ENCODE measurements at regions of chr6 and their contacts with region 1.

Region 1: DNA sequence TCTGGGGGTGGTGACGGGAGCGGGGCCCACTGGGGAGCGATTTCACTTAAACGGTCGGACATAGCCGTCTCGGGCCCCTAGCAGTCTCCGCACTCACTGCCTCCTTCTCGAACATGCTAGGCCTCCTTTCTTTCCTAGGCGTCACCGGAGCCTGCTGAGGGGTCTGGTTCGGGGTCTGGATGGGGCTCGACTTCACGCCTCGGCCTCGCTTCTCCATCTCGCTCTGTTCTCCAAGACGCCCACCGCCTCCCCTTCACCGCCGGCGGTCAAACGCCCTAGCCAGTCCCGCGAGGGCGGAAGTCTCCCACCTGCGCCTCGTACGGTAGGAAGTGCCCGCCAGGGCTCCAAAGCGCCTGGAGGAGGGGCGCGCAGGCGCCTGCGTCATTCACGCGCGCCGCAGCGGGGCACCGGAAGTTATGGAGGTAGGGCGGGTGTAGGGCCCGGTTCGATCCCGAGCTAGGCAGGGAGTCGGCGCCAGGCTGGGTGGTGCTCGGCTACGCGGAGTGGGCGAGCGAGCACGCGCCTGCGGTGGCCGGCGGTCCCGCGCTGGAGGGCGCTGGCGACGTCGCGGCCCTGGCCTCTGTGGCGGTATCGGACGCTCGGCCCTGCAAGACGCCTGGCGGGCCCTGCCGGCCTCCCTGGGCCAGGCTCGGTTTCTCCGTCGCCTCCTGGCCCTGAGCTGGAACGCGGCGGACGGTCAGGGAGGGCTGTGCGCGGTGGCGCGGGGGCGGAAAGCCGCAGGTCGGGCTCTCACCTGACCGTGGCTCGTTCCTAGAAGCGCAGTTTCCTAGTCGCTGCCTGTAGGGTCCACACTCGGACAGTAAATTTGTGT is at the starts of genes DYNLT2 and ERMARD:
- DNase-seq: peak; percentile 82 to 97 (median 93)
- ATAC-seq: peak; percentile 94
- H3K4me3 ChIP-seq: peak within 1 kb of the TSS; percentile 61 to 80
- H3K4me3 Mint-ChIP-seq: peak within 1 kb of the TSS; percentile 100
- H3K27ac ChIP-seq: peak within 1 kb of the TSS; percentile 89 to 95
- H3K27ac Mint-ChIP-seq: peak within 1 kb of the TSS; percentile 100
- H3K4me1 ChIP-seq: peaks cover 26% of the 10 kb centered on the region
- H3K4me1 Mint-ChIP-seq: peaks cover 40% of the 10 kb centered on the region
- H3K27me3 ChIP-seq: no peaks in the 10 kb centered on the region
- H3K27me3 Mint-ChIP-seq: no peaks in the 10 kb centered on the region
- CTCF ChIP-seq: no peak
- total RNA-seq, gene DYNLT2: 3.6 to 3.7 TPM
- total RNA-seq, gene ERMARD: 21.2 to 23.2 TPM

Region 2: DNA sequence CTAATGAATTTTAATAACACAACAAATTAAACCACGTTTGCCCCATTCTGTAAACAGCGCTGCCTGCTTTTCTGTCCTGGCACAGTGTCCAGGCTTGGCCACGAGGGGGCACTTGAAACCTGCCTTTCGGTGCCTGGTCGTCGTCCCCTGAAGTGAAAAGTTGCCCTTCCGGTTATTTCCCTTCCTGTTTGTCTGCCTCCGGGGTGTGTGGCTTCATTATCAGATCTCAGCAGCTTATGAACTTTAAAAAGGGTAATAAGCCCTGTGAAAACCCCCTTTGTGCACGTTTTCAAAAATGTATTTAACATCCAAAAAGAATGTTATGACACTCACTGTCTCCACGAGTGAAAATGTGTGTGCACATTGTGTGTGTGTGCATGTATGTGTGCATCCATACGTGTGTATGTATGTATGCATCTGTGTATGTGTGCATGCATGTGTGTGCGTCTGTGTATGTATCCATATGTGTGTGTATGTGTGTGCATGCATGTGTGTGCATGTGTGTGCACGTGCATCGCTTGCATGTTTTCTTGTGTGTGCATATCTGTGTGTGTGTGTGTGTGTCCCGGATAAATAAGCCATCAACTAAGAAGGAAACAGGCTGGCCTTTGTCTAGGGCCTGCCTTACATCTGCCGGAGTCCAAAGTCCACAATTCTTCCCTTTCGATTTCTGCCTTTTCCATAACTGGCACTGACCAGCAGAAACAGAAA is 856.2 kb before region 1 on chr6:
- CTCF ChIA-PET with region 1: no interaction called
- POLR2A ChIA-PET with region 1: no interaction called
- intact Hi-C with region 1: loop called in 1 of 2 experiments (anchors 1 kb)
- DNase-seq: peak; percentile 52 to 91 (median 78)
- ATAC-seq: peak; percentile 98
- H3K4me3 ChIP-seq: peak overlapping the region; percentile 8 to 16
- H3K4me3 Mint-ChIP-seq: peak overlapping the region; percentile 57
- H3K27ac ChIP-seq: no peak overlapping the region
- H3K27ac Mint-ChIP-seq: peak overlapping the region; percentile 69
- H3K4me1 ChIP-seq: peaks cover 7% of the 10 kb centered on the region
- H3K4me1 Mint-ChIP-seq: peaks cover 17% of the 10 kb centered on the region
- H3K27me3 ChIP-seq: no peaks in the 10 kb centered on the region
- H3K27me3 Mint-ChIP-seq: peaks cover 4% of the 10 kb centered on the region
- CTCF ChIP-seq: peak; percentile 81

Region 3: DNA sequence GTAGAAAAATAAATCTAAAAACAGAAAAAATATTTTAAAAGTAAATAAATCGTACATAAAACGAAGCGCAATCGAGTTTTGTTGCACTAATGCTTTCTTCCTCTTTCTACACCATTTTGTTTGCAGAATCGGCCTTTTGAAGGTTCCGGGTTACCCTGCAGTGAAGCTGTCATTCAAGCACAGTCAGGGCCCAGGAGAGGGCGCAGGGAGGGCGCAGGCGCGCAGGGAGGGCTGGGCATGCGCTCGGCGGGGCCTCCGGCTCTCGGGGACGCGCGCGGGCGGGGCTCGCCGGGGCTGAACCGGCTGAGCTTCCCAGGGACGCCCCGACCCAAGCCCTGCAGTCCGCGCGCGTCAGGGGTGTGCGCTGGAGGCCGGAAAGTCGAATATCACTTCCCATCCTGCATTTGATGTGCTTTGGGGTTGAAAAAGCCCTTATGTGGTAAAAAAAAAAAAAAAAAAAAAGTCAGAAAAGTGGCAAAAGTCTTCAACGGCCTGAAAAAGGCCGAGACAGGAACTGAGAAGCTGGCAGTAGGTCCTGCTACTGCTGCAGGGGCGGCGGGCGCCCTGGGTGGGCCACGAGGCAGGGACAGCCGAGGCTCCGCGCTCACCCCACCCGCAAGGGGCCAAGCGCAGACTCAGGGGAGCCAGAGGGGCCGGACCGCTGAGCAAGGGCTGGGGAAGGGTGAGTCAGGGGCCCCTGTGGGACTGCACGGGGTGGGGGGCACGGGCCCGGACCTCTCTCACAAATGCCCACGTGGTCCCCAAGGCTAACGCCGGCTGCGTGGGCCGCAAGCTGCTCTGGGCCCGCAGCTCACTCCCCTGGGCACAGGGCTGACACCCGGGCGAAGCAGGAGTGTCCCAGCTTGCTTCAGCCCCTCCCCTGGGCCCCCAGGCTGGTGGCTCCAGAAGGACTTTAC is 538.3 kb before region 1 on chr6:
- CTCF ChIA-PET with region 1: no interaction called
- POLR2A ChIA-PET with region 1: no interaction called
- intact Hi-C with region 1: loop called (anchors 2 to 10 kb)
- DNase-seq: peak; percentile 80 to 95 (median 86)
- ATAC-seq: peak; percentile 99
- H3K4me3 ChIP-seq: peak overlapping the region; percentile 20 to 23
- H3K4me3 Mint-ChIP-seq: peak overlapping the region; percentile 72
- H3K27ac ChIP-seq: peak overlapping the region in 1 of 2 experiments; percentile 66
- H3K27ac Mint-ChIP-seq: peak overlapping the region; percentile 78
- H3K4me1 ChIP-seq: peaks cover 7% of the 10 kb centered on the region
- H3K4me1 Mint-ChIP-seq: peaks cover 9% of the 10 kb centered on the region
- H3K27me3 ChIP-seq: no peaks in the 10 kb centered on the region
- H3K27me3 Mint-ChIP-seq: no peaks in the 10 kb centered on the region
- CTCF ChIP-seq: no peak

Region 4: DNA sequence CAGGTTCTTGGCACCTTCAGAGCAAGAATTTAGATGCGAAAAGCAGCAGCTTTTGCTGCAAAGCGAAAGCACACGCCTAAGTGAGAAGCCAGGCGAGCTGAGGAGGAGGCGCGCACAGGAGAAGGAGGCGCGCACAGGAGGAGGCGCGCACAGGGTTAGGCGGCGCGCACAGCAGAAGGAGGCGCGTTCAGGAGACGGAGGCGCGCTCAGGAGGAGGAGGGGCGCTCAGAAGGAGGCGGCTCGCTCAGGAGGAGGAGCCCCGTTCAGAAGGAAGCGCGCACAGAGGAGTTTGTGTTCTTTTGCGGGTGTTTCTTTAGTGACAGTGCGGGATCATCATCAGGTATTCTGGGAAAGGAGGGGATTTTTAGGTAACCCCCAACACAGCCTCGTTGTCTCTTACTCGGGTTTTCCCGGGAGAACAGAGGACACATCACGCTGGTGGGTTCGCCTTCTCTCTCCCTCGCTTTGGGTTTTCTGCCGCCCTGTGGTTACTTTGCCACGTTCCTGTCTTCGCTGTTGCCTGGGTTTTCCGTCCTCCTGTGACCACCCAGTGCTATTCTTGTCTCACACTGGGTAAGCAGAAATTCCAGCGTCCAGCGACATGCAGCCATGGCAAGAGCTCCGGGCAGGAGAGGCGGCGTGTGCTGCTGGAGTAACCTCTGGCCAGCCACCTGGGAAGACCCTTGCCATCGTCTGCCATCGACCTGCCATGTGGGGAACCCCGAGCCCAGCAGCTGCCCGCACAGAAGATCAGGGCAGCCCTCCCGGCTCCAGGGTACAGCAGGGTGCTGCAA is 96.7 kb before region 1 on chr6:
- CTCF ChIA-PET with region 1: no interaction called
- POLR2A ChIA-PET with region 1: interaction called, 3 read pairs
- intact Hi-C with region 1: loop called (anchors 1 to 2 kb)
- DNase-seq: peak; percentile 54 to 89 (median 69)
- ATAC-seq: peak; percentile 97
- H3K4me3 ChIP-seq: peak overlapping the region; percentile 52 to 63
- H3K4me3 Mint-ChIP-seq: peak overlapping the region; percentile 92
- H3K27ac ChIP-seq: peak overlapping the region; percentile 49 to 61
- H3K27ac Mint-ChIP-seq: peak overlapping the region; percentile 90
- H3K4me1 ChIP-seq: peaks cover 6% of the 10 kb centered on the region
- H3K4me1 Mint-ChIP-seq: peaks cover 15% of the 10 kb centered on the region
- H3K27me3 ChIP-seq: no peaks in the 10 kb centered on the region
- H3K27me3 Mint-ChIP-seq: no peaks in the 10 kb centered on the region
- CTCF ChIP-seq: no peak

Region 5: GRCh38 chr6:169723200-169723909 is 28.1 kb before region 1 on chr6:
- CTCF ChIA-PET with region 1: interaction called, 5 read pairs
- POLR2A ChIA-PET with region 1: interaction called, 27 read pairs
- intact Hi-C with region 1: loop called (anchors 1 kb)
- DNase-seq: peak; percentile 47 to 85 (median 66)
- ATAC-seq: peak; percentile 30
- H3K4me3 ChIP-seq: peak overlapping the region; percentile 68 to 79
- H3K4me3 Mint-ChIP-seq: peak overlapping the region; percentile 85
- H3K27ac ChIP-seq: peak overlapping the region; percentile 72 to 84
- H3K27ac Mint-ChIP-seq: peak overlapping the region; percentile 96
- H3K4me1 ChIP-seq: peaks cover 22% of the 10 kb centered on the region
- H3K4me1 Mint-ChIP-seq: peaks cover 42% of the 10 kb centered on the region
- H3K27me3 ChIP-seq: no peaks in the 10 kb centered on the region
- H3K27me3 Mint-ChIP-seq: no peaks in the 10 kb centered on the region
- CTCF ChIP-seq: no peak

Region 6: GRCh38 chr6:170554013-170554795 is 802.7 kb after region 1 on chr6 and contains the start of gene TBP:
- CTCF ChIA-PET with region 1: no interaction called
- POLR2A ChIA-PET with region 1: interaction called, 9 read pairs
- intact Hi-C with region 1: loop called (anchors 1 kb)
- DNase-seq: peak; percentile 93 to 99 (median 98)
- ATAC-seq: peak; percentile 91
- H3K4me3 ChIP-seq: peak within 1 kb of the TSS; percentile 61 to 93
- H3K4me3 Mint-ChIP-seq: no peak within 1 kb of the TSS
- H3K27ac ChIP-seq: peak within 1 kb of the TSS; percentile 89 to 96
- H3K27ac Mint-ChIP-seq: no peak within 1 kb of the TSS
- H3K4me1 ChIP-seq: peaks cover 39% of the 10 kb centered on the region
- H3K4me1 Mint-ChIP-seq: peaks cover 38% of the 10 kb centered on the region
- H3K27me3 ChIP-seq: no peaks in the 10 kb centered on the region
- H3K27me3 Mint-ChIP-seq: no peaks in the 10 kb centered on the region
- CTCF ChIP-seq: no peak
- total RNA-seq, gene TBP: 13.8 to 13.9 TPM

Region 7: DNA sequence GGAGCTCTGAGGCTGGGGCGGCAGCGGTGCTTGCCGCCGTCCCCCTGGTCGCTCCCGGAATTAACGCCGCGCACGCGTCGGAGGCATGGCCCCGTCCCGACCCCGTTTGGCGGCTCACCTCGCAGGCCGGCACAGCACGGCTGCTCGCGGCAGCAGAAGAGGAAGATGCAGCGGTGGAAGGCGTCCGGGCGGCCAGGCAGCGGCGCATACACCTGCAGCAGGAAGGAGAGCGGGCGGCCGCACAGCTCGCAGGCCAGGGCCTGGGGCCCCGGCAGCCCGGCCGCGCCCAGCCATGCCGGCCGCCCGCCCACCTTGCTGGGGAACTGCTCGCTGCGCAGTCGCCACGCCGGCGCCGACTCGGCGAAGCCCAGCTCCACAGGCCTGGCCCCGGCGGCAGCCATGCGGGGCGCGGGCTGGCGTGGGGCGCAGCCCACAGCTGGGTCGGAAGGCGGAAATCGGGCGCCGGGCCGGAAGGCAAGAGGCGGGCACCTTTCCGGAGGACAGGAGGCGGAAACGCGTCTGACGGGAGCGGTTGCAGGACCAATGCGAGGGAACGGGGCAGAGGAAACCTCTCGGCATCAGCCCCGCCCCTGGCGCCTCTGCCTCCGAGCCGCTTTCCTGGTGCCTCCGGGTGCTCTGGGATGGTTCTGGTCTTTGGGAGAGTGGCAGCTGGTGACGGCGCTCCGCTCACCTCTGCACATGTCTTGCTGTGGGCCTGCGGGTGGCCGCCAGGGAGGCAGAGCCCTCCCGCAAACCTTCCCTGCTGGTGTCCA is 832.9 kb after region 1 on chr6 and contains the start of gene PDCD2:
- CTCF ChIA-PET with region 1: no interaction called
- POLR2A ChIA-PET with region 1: interaction called, 4 read pairs
- intact Hi-C with region 1: loop called in 1 of 2 experiments (anchors 1 kb)
- DNase-seq: peak; percentile 78 to 96 (median 92)
- ATAC-seq: peak; percentile 92
- H3K4me3 ChIP-seq: peak within 1 kb of the TSS; percentile 73 to 91
- H3K4me3 Mint-ChIP-seq: peak within 1 kb of the TSS; percentile 97
- H3K27ac ChIP-seq: peak within 1 kb of the TSS; percentile 77 to 89
- H3K27ac Mint-ChIP-seq: peak within 1 kb of the TSS; percentile 98
- H3K4me1 ChIP-seq: peaks cover 21% of the 10 kb centered on the region
- H3K4me1 Mint-ChIP-seq: peaks cover 33% of the 10 kb centered on the region
- H3K27me3 ChIP-seq: no peaks in the 10 kb centered on the region
- H3K27me3 Mint-ChIP-seq: no peaks in the 10 kb centered on the region
- CTCF ChIP-seq: no peak
- total RNA-seq, gene PDCD2: 43.9 to 46.3 TPM